Heart right ventricle (tissue), 16 donors: ENCODE measurements at regions of chr2 and their contacts with region 1.

Region 1: GRCh38 chr2:119759451-119760236 is at the start of gene PTPN4:
- DNase-seq: peak; percentile 96 to 97
- ATAC-seq: peak; percentile 97 to 99 (median 98)
- H3K4me3 ChIP-seq: peak within 1 kb of the TSS; percentile 69 to 94 (median 86)
- H3K27ac ChIP-seq: peak within 1 kb of the TSS; percentile 81 to 97 (median 94)
- H3K4me1 ChIP-seq: peaks cover 0 to 55% (median 32%) of the 10 kb centered on the region in 9 donors
- H3K27me3 ChIP-seq: no peaks in the 10 kb centered on the region
- CTCF ChIP-seq: peak in 1 of 9 donors; percentile 13
- total RNA-seq, gene PTPN4: 25.9 to 56.1 (median 49.8) TPM

Region 2: DNA sequence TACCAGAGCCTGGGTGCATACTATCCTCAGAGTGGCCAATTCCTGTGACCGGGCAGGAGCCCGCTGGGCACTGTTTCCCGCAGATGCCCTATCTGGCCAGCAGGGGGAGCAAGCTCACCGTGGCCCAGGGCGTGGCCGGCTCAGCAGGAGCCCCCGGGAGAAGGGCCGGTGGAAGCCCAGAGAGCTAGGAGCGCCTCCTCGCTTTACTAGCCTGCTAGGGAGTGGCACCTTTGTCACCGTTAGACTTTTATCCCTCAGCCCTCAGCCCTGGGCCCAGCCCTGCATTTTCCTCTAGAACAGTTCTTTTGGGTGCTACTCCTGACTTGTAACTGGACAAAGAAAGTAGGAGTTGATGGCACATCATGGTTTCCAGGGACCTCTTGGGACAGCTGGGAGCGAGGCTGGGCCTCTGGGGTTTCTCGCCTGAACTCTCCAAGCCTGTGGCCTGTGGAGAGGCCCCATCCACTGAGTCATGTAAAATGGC is 56.7 kb before region 1 on chr2:
- intact Hi-C with region 1: loop called in 1 of 10 experiments (anchors 10 kb)
- DNase-seq: peak; percentile 59 to 63
- ATAC-seq: peak; percentile 79 to 91 (median 89)
- H3K4me3 ChIP-seq: no peak overlapping the region
- H3K27ac ChIP-seq: no peak overlapping the region
- H3K4me1 ChIP-seq: peaks cover 0 to 23% (median 5%) of the 10 kb centered on the region in 9 donors
- H3K27me3 ChIP-seq: no peaks in the 10 kb centered on the region
- CTCF ChIP-seq: peak; percentile 87 to 97 (median 92)

Region 3: DNA sequence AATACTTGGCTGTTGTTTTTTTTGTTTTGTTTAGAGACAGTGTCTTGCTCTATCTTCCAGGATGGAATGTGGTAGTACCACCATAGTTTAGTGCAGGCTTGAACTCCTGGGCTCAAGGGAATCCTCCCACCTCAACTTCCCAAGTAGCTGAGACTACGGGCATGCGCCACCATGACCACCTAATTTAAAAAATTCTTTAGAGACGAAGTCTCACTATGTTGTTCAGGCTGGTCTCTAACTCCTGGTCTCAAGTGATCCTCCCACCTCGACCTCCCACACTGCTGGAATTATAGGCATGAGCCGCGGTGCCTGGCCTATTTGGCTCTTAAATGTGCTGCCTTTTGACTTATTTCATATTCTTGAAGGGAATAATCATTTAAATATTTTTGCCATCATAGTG is 60.2 kb after region 1 on chr2:
- intact Hi-C with region 1: loop called in 5 of 10 experiments (anchors 2 to 5 kb)
- DNase-seq: no peak
- ATAC-seq: no peak
- H3K4me3 ChIP-seq: no peak overlapping the region
- H3K27ac ChIP-seq: peak overlapping the region in 3 of 10 donors; percentile 6 to 45 (median 16)
- H3K4me1 ChIP-seq: peaks cover 0 to 34% (median 11%) of the 10 kb centered on the region in 9 donors
- H3K27me3 ChIP-seq: no peaks in the 10 kb centered on the region
- CTCF ChIP-seq: no peak

Region 4: DNA sequence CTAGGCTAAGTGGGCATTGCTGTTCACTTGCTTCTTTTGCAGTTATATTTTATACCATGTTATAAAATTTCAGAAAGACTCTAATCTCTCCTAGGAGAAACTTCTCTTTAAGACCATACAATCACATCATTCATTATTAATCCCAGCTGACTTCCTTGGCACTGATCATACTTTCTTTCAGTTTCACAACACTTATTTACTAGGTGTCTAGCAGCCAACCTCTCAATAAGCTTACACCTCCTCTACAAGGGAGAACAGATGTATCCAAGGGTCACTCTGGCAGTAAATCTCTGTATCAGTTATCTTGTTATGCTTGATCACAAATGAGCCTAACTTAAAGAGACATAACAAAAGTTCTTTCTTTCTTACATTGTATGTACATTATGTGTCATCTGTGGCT is 183.4 kb after region 1 on chr2:
- intact Hi-C with region 1: loop called in 4 of 10 experiments (anchors 10 kb)
- DNase-seq: no peak
- ATAC-seq: peak in 1 of 8 donors; percentile 31
- H3K4me3 ChIP-seq: no peak overlapping the region
- H3K27ac ChIP-seq: no peak overlapping the region
- H3K4me1 ChIP-seq: peaks cover 0 to 35% (median 10%) of the 10 kb centered on the region in 9 donors
- H3K27me3 ChIP-seq: no peaks in the 10 kb centered on the region
- CTCF ChIP-seq: no peak

Region 5: GRCh38 chr2:120012771-120013596 is 253.3 kb after region 1 on chr2 and contains the start of gene EPB41L5:
- intact Hi-C with region 1: loop called in 1 of 10 experiments (anchors 10 kb)
- DNase-seq: peak; percentile 89 to 95
- ATAC-seq: peak; percentile 97 to 99 (median 99)
- H3K4me3 ChIP-seq: peak within 1 kb of the TSS; percentile 57 to 98 (median 94)
- H3K27ac ChIP-seq: peak within 1 kb of the TSS; percentile 70 to 90 (median 86)
- H3K4me1 ChIP-seq: peaks cover 0 to 26% (median 7%) of the 10 kb centered on the region in 9 donors
- H3K27me3 ChIP-seq: peaks cover 0 to 9% (median 0%) of the 10 kb centered on the region in 7 donors
- CTCF ChIP-seq: peak in 3 of 9 donors; percentile 5 to 28 (median 15)
- total RNA-seq, gene EPB41L5: 8.4 to 18.8 (median 14.3) TPM